ENCODE measurements at regions of chr19 and their contacts with region 1.

Region 1: GRCh38 chr19:28603453-28603852 is 609.5 kb downstream of the UQCRFS1 start:
- DNase-seq: peak; percentile 81
- H3K4me3 ChIP-seq: no peak overlapping the region
- H3K27ac ChIP-seq: peak overlapping the region; percentile 72
- H3K4me1 ChIP-seq: peaks cover 54% of the 10 kb centered on the region
- CTCF ChIP-seq: no peak

Region 2: GRCh38 chr19:28519952-28520861 is 83.2 kb before region 1 on chr19:
- CTCF ChIA-PET with region 1: no interaction called
- POLR2A ChIA-PET with region 1: no interaction called
- intact Hi-C with region 1: no loop called
- DNase-seq: no peak
- H3K4me3 ChIP-seq: no peak overlapping the region
- H3K27ac ChIP-seq: no peak overlapping the region
- H3K4me1 ChIP-seq: peaks cover 4% of the 10 kb centered on the region
- CTCF ChIP-seq: no peak

Region 3: GRCh38 chr19:28586474-28586873 is 17.0 kb before region 1 on chr19:
- CTCF ChIA-PET with region 1: no interaction called
- POLR2A ChIA-PET with region 1: interaction called, 6 read pairs
- intact Hi-C with region 1: loop called (anchors 1 kb)
- DNase-seq: no peak
- H3K4me3 ChIP-seq: no peak overlapping the region
- H3K27ac ChIP-seq: no peak overlapping the region
- H3K4me1 ChIP-seq: peaks cover 66% of the 10 kb centered on the region
- CTCF ChIP-seq: no peak

Region 4: GRCh38 chr19:28737021-28737895 is 133.8 kb after region 1 on chr19:
- CTCF ChIA-PET with region 1: no interaction called
- POLR2A ChIA-PET with region 1: no interaction called
- intact Hi-C with region 1: no loop called
- DNase-seq: peak; percentile 53
- H3K4me3 ChIP-seq: no peak overlapping the region
- H3K27ac ChIP-seq: no peak overlapping the region
- H3K4me1 ChIP-seq: no peaks in the 10 kb centered on the region
- CTCF ChIP-seq: peak; percentile 85

Measured in OCI-LY7 (cell line).